ENCODE measurements at regions of chr1 and their contacts with region 1.

Region 1: DNA sequence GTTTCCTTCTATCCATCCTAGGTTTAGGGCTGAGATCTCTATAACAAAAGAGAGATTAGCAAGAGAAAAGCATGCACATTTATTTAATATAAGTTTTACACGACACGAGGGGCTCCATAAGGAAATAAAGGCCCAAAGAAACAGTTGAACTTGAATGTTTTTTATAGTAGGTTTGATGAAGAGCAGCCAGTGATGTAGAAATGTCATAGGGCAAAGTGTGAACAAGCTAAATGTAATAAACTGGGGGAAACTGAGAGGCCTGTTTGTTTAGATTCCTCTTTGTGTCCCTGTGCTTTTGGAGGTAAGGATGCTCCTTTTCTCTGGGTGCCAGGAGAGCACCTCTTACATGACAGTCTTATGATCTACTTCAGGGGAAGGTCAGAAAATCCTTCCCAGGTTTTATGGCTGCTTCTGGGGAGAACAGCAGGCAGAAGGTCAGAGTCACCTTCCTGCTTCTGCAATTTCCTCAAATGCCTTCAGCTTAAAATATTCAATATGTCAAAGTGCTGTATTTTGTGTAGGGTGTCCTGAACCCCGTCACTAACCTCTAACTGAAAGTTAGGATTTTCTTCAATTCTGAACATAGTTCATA is 9.5 kb upstream of the HORMAD1 start:
- DNase-seq: no peak
- ATAC-seq: no peak
- H3K4me3 ChIP-seq: no peak overlapping the region
- H3K27ac ChIP-seq: no peak overlapping the region
- H3K4me1 ChIP-seq: no peaks in the 10 kb centered on the region
- H3K27me3 ChIP-seq: no peaks in the 10 kb centered on the region
- CTCF ChIP-seq: no peak
- POLR2A ChIP-seq: no peak

Region 2: GRCh38 chr1:150798525-150798924 is 68.3 kb after region 1 on chr1:
- intact Hi-C with region 1: loop called in 1 of 2 experiments (anchors 10 kb)
- DNase-seq: no peak
- ATAC-seq: no peak
- H3K4me3 ChIP-seq: no peak overlapping the region
- H3K27ac ChIP-seq: no peak overlapping the region
- H3K4me1 ChIP-seq: no peaks in the 10 kb centered on the region
- H3K27me3 ChIP-seq: no peaks in the 10 kb centered on the region
- CTCF ChIP-seq: no peak
- POLR2A ChIP-seq: no peak

Region 3: GRCh38 chr1:150813058-150813707 is 83.0 kb after region 1 on chr1:
- intact Hi-C with region 1: no loop called
- DNase-seq: peak; percentile 61 to 70 (median 65)
- ATAC-seq: peak; percentile 92 to 94 (median 94)
- H3K4me3 ChIP-seq: no peak overlapping the region
- H3K27ac ChIP-seq: no peak overlapping the region
- H3K4me1 ChIP-seq: peaks cover 0 to 6% (median 0%) of the 10 kb centered on the region in 4 donors
- H3K27me3 ChIP-seq: no peaks in the 10 kb centered on the region
- CTCF ChIP-seq: peak; percentile 68 to 73 (median 73)
- POLR2A ChIP-seq: no peak

Measured in right lobe of liver (tissue), 6 donors.